ENCODE measurements at regions of chr1 and their contacts with region 1.

Region 1: GRCh38 chr1:202750758-202751157 is 40.5 kb upstream of the SYT2 start:
- DNase-seq: peak in 1 of 2 donors; percentile 19
- ATAC-seq: no peak
- H3K4me3 ChIP-seq: no peak overlapping the region
- H3K4me3 Mint-ChIP-seq: no peak overlapping the region
- H3K27ac ChIP-seq: no peak overlapping the region
- H3K27ac Mint-ChIP-seq: no peak overlapping the region
- H3K4me1 ChIP-seq: no peaks in the 10 kb centered on the region
- H3K4me1 Mint-ChIP-seq: no peaks in the 10 kb centered on the region
- H3K27me3 ChIP-seq: no peaks in the 10 kb centered on the region
- H3K27me3 Mint-ChIP-seq: no peaks in the 10 kb centered on the region
- CTCF ChIP-seq: no peak

Region 2: DNA sequence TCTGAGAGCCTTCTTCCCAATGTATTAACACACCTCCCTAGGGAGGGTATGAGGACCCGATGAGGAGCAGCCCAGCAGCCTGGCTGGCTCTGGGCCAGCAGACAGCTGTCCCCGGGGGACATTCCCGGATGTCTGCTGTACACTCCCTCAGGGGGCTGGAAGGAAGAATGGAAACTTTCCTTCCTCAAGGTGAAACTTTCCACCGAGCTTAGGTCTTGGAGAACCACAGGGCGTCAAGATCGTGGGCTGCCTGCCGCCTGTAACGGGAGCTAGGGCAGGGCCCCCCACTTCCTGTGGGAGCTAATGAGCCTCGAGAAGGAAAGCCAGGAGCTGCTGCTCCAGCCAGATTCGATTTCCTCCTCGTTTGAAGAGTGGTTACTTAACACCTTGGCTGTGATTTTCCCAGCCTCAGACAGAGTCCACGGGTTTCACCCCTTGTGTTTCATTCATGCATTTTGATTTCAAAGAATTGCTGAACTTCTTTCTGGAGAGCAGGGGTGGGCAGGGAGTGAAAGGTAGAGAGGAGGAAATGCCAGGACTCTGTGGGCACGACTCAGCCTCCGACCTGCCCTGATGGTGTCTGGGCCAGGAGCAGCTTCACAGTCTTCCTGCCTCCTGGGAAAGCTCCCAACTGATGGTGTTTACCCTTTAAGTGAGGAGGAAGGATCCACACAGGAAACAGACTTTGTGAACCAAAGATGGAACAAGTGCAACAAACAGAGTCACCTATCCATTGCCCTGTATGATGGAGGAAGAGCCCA is 438.7 kb before region 1 on chr1:
- intact Hi-C with region 1: no loop called
- DNase-seq: no peak
- ATAC-seq: no peak
- H3K4me3 ChIP-seq: no peak overlapping the region
- H3K4me3 Mint-ChIP-seq: no peak overlapping the region
- H3K27ac ChIP-seq: no peak overlapping the region
- H3K27ac Mint-ChIP-seq: peak overlapping the region in 1 of 2 donors; percentile 53
- H3K4me1 ChIP-seq: no peaks in the 10 kb centered on the region
- H3K4me1 Mint-ChIP-seq: peaks cover 0 to 15% of the 10 kb centered on the region in 2 donors
- H3K27me3 ChIP-seq: no peaks in the 10 kb centered on the region
- H3K27me3 Mint-ChIP-seq: no peaks in the 10 kb centered on the region
- CTCF ChIP-seq: no peak

Region 3: GRCh38 chr1:202852163-202852904 is 101.6 kb after region 1 on chr1:
- intact Hi-C with region 1: loop called (anchors 1 kb)
- DNase-seq: peak in 1 of 2 donors; percentile 60
- ATAC-seq: peak; percentile 70 to 74 (median 71)
- H3K4me3 ChIP-seq: no peak overlapping the region
- H3K4me3 Mint-ChIP-seq: no peak overlapping the region
- H3K27ac ChIP-seq: no peak overlapping the region
- H3K27ac Mint-ChIP-seq: no peak overlapping the region
- H3K4me1 ChIP-seq: no peaks in the 10 kb centered on the region
- H3K4me1 Mint-ChIP-seq: no peaks in the 10 kb centered on the region
- H3K27me3 ChIP-seq: no peaks in the 10 kb centered on the region
- H3K27me3 Mint-ChIP-seq: no peaks in the 10 kb centered on the region
- CTCF ChIP-seq: peak; percentile 30

Region 4: GRCh38 chr1:202998836-202999750 is 248.3 kb after region 1 on chr1:
- intact Hi-C with region 1: loop called (anchors 1 kb)
- DNase-seq: peak; percentile 30 to 84
- ATAC-seq: peak; percentile 66 to 69 (median 67)
- H3K4me3 ChIP-seq: no peak overlapping the region
- H3K4me3 Mint-ChIP-seq: no peak overlapping the region
- H3K27ac ChIP-seq: no peak overlapping the region
- H3K27ac Mint-ChIP-seq: no peak overlapping the region
- H3K4me1 ChIP-seq: peaks cover 4% of the 10 kb centered on the region
- H3K4me1 Mint-ChIP-seq: peaks cover 5% of the 10 kb centered on the region in 2 donors
- H3K27me3 ChIP-seq: no peaks in the 10 kb centered on the region
- H3K27me3 Mint-ChIP-seq: peaks cover 25 to 42% of the 10 kb centered on the region in 2 donors
- CTCF ChIP-seq: peak; percentile 93